HepG2 (cell line): ENCODE measurements at regions of chr18 and their contacts with region 1.

Region 1: DNA sequence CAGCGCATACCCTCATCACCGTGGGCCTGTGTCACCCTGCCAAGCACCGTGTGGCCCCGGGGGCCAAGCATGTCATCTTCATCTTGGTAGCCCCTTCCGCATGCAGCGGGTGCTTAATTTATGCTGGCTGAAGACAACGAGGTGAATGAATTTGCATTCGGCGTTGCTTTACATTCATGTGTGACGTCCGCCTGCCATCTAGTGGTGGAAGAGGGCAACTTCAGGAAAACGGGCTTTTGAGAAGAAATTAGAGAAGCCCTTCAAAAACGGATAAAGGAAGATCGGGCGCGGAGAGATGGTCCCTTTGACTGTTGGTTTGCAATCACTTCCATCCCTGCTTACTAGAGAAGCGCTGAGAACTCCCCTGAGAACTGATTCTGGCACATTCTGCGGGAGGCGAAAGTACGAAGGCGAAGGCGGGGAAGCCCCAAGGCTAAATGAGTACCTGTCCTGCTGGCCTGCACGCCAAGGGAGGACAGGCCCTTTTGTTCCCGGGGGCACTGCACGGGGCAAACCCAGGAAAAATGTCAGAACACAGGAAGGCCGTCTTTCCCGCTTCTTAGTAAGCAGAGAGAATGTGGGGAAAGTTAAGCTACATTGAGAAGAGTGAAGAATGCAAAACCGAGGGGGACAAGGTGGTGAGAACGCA is 145.9 kb downstream of the ZNF516 start:
- DNase-seq: peak; percentile 67
- ATAC-seq: peak; percentile 11
- H3K4me3 ChIP-seq: peak overlapping the region; percentile 20 to 69 (median 41); a peak in 5 of 6 replicates
- H3K27ac ChIP-seq: no peak overlapping the region
- H3K4me1 ChIP-seq: peaks cover 49% of the 10 kb centered on the region
- H3K27me3 ChIP-seq: peaks cover 0 to 18% of the 10 kb centered on the region in 2 experiments; a peak in 3 of 5 replicates
- CTCF ChIP-seq: peak; percentile 90
- EP300 ChIP-seq: no peak
- POLR2A ChIP-seq: no peak
- RAD21 ChIP-seq: peak; percentile 58; the same call in 1 of the 2 replicates

Region 2: DNA sequence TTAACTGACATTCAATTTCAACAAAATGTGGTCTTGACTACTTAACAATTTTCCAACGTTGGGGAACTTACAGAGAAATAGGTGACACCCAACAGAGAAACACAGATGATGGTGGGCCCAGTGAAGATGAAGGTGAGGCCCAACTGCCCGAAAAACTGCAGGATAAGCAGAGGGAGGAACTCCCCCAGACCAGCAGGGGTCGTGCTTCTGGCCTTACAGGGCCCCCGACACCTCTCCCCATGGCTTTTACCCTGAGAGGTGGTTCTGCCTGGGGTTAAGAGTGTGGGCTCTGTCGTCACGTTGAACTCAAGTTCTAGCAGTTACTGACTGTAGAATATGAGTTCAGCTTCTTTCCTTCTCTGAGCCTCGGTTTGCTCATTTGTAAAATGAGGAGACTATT is 802.2 kb before region 1 on chr18:
- CTCF ChIA-PET with region 1: no interaction called
- POLR2A ChIA-PET with region 1: no interaction called
- in situ Hi-C with region 1: no loop called
- intact Hi-C with region 1: loop called (anchors 2 kb)
- DNase-seq: no peak
- ATAC-seq: peak; percentile 43; the same call in 1 of the 3 replicates
- H3K4me3 ChIP-seq: no peak overlapping the region
- H3K27ac ChIP-seq: no peak overlapping the region
- H3K4me1 ChIP-seq: no peaks in the 10 kb centered on the region
- H3K27me3 ChIP-seq: peaks cover 0 to 4% of the 10 kb centered on the region in 2 experiments; a peak in 2 of 5 replicates
- CTCF ChIP-seq: peak; percentile 41
- EP300 ChIP-seq: no peak
- POLR2A ChIP-seq: no peak
- RAD21 ChIP-seq: no peak

Region 3: GRCh38 chr18:75884728-75885127 is 464.5 kb before region 1 on chr18:
- CTCF ChIA-PET with region 1: interaction called, 7 read pairs
- POLR2A ChIA-PET with region 1: no interaction called
- in situ Hi-C with region 1: loop called (anchors 10 kb)
- intact Hi-C with region 1: no loop called
- DNase-seq: no peak
- ATAC-seq: no peak
- H3K4me3 ChIP-seq: no peak overlapping the region
- H3K27ac ChIP-seq: no peak overlapping the region
- H3K4me1 ChIP-seq: no peaks in the 10 kb centered on the region
- H3K27me3 ChIP-seq: no peaks in the 10 kb centered on the region
- CTCF ChIP-seq: peak; percentile 33; the same call in 1 of the 2 replicates
- EP300 ChIP-seq: no peak
- POLR2A ChIP-seq: no peak
- RAD21 ChIP-seq: no peak

Region 4: DNA sequence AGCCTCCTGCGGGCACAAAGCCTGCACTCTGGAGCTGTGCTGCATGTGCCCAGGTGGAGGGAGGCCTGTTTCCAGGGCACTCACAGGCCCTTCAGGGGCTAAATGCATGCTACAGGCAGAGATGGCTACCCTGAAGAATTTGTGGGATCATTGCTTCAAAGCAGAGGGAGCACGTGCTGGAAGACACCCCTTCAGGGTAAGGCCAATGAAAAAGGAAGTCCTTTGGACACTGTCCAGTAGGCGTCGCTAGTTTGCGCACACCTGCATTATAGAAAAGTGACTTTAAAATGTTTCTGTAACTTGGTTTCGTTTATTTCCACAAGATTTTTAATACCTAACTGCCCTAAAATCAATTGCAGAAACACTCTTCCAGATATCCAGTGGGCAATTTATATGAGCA is 179.5 kb before region 1 on chr18:
- CTCF ChIA-PET with region 1: interaction called, 5 read pairs
- POLR2A ChIA-PET with region 1: no interaction called
- in situ Hi-C with region 1: loop called (anchors 10 kb)
- intact Hi-C with region 1: loop called (anchors 1 kb)
- DNase-seq: no peak
- ATAC-seq: peak; percentile 53
- H3K4me3 ChIP-seq: no peak overlapping the region
- H3K27ac ChIP-seq: no peak overlapping the region
- H3K4me1 ChIP-seq: no peaks in the 10 kb centered on the region
- H3K27me3 ChIP-seq: peaks cover 1 to 44% of the 10 kb centered on the region in 2 experiments; a peak in 2 of 5 replicates
- CTCF ChIP-seq: peak; percentile 46
- EP300 ChIP-seq: no peak
- POLR2A ChIP-seq: no peak
- RAD21 ChIP-seq: no peak

Region 5: DNA sequence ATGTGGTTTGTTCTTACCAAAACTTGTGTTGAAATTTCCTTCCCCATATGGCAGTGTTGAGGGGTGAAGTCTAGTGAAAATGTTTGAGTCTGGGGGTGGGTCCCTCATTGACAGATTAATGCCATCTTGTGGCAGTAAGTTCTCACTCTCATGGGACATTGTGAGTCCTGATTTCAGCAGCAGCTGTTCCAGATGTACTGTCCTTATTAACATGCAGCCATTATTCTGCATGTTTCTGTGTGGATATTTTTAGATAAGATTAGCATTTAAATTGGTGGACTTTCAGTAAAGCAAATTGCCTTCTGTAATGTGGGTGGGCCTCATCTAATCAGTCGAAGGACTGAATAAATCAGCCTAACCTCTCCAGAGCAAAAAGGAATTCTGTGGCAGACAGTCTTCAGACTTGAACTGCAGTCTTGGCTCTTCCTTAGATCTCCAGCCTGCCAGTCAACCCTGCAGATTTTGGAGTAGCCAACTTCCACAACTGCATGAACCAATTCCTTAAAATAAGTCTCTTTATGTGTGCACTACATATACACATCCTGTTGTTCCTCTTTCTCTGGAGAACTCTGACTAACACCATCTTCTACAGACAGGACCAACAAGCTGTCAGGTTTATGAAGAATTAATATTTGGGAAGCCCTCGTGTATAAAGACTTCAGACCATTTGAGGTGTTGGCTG is 284.5 kb after region 1 on chr18:
- CTCF ChIA-PET with region 1: no interaction called
- POLR2A ChIA-PET with region 1: no interaction called
- in situ Hi-C with region 1: no loop called
- intact Hi-C with region 1: no loop called
- DNase-seq: no peak
- ATAC-seq: no peak
- H3K4me3 ChIP-seq: no peak overlapping the region
- H3K27ac ChIP-seq: no peak overlapping the region
- H3K4me1 ChIP-seq: no peaks in the 10 kb centered on the region
- H3K27me3 ChIP-seq: peaks cover 3 to 11% of the 10 kb centered on the region in 2 experiments; a peak in 3 of 5 replicates
- CTCF ChIP-seq: 0 out of 2 replicates have a peak, but pooled peaks have one; percentile 4
- EP300 ChIP-seq: no peak
- POLR2A ChIP-seq: no peak
- RAD21 ChIP-seq: no peak